ENCODE measurements at regions of chr5 and their contacts with region 1.

Region 1: GRCh38 chr5:58999804-59000595 is 417.1 kb downstream of the RAB3C start:
- DNase-seq: no peak
- H3K4me3 ChIP-seq: no peak overlapping the region
- H3K27ac ChIP-seq: no peak overlapping the region
- H3K4me1 ChIP-seq: peaks cover 4 to 14% of the 10 kb centered on the region in 2 donors
- H3K27me3 ChIP-seq: no peaks in the 10 kb centered on the region
- CTCF ChIP-seq: no peak
- POLR2A ChIP-seq: no peak

Region 2: DNA sequence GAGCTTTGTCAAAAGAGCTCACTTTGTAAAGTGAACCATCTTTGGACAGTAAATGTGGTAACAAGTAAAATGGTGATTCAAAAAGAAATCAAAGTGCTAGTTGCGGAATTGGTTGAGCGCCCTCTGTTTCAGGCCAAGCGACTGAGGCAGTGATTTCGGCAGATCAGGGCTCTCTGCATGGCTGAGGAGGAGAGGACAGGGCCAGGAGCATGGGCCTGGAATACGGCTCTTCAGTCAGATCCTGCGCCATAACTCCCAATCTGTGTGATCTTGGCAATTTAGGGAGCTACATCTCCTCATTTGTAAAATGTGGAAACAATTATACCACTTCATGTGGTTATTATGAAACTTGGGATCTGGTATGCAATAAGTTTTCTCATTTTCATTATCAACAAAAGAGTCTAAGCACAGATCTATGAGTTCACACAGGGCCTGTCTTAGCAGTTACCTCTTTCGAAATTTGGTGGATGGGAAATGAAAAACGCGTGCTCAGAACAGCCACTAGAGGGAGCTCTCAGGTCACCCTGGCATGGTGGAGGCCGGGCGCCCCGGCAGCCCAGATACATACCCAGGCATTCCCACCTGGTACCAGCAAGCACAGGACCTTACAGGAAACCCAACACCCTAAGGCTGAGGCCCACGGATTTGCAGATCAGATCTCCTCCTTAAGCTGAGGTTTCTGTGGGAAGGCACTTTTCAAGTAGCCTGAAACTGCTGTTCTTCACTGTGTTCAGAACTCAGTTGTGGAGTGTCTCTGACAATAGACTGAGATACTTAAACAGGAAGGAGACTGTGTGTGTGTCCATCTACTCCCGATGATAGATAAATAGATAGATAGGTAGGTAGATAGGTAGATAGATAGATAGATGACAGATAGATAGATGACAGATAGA is 113.4 kb before region 1 on chr5:
- intact Hi-C with region 1: loop called (anchors 5 kb)
- DNase-seq: peak; percentile 45 to 62
- H3K4me3 ChIP-seq: no peak overlapping the region
- H3K27ac ChIP-seq: peak overlapping the region in 1 of 3 donors; percentile 34
- H3K4me1 ChIP-seq: peaks cover 3 to 5% of the 10 kb centered on the region in 2 donors
- H3K27me3 ChIP-seq: no peaks in the 10 kb centered on the region
- CTCF ChIP-seq: peak; percentile 66 to 95 (median 74)
- POLR2A ChIP-seq: no peak